ENCODE measurements at regions of chr19 and their contacts with region 1.

Region 1: GRCh38 chr19:43463381-43464136 is 1.8 kb downstream of the LYPD3 start:
- DNase-seq: peak; percentile 94 to 100 (median 99)
- ATAC-seq: peak; percentile 92
- H3K4me3 ChIP-seq: peak overlapping the region; percentile 92
- H3K4me3 Mint-ChIP-seq: peak overlapping the region; percentile 87 to 99 (median 94)
- H3K27ac ChIP-seq: peak overlapping the region; percentile 92
- H3K27ac Mint-ChIP-seq: peak overlapping the region; percentile 89 to 100 (median 99)
- H3K4me1 ChIP-seq: peaks cover 8 to 19% of the 10 kb centered on the region in 2 donors
- H3K4me1 Mint-ChIP-seq: peaks cover 24 to 67% (median 51%) of the 10 kb centered on the region in 7 donors
- H3K27me3 ChIP-seq: no peaks in the 10 kb centered on the region
- H3K27me3 Mint-ChIP-seq: peaks cover 0 to 2% (median 0%) of the 10 kb centered on the region in 5 donors

Region 2: GRCh38 chr19:43433358-43433673 is 30.2 kb before region 1 on chr19:
- CTCF ChIA-PET with region 1: interaction called, 10 read pairs
- POLR2A ChIA-PET with region 1: interaction called, 29 read pairs
- intact Hi-C with region 1: loop called in 1 of 2 experiments (anchors 1 kb)
- DNase-seq: no peak
- ATAC-seq: no peak
- H3K4me3 ChIP-seq: no peak overlapping the region
- H3K4me3 Mint-ChIP-seq: peak overlapping the region in 1 of 10 donors; percentile 29
- H3K27ac ChIP-seq: no peak overlapping the region
- H3K27ac Mint-ChIP-seq: peak overlapping the region in 8 of 9 donors; percentile 10 to 89 (median 70)
- H3K4me1 ChIP-seq: peaks cover 14 to 27% of the 10 kb centered on the region in 2 donors
- H3K4me1 Mint-ChIP-seq: peaks cover 23 to 59% (median 46%) of the 10 kb centered on the region in 7 donors
- H3K27me3 ChIP-seq: no peaks in the 10 kb centered on the region
- H3K27me3 Mint-ChIP-seq: peaks cover 0 to 2% (median 0%) of the 10 kb centered on the region in 5 donors

Region 3: DNA sequence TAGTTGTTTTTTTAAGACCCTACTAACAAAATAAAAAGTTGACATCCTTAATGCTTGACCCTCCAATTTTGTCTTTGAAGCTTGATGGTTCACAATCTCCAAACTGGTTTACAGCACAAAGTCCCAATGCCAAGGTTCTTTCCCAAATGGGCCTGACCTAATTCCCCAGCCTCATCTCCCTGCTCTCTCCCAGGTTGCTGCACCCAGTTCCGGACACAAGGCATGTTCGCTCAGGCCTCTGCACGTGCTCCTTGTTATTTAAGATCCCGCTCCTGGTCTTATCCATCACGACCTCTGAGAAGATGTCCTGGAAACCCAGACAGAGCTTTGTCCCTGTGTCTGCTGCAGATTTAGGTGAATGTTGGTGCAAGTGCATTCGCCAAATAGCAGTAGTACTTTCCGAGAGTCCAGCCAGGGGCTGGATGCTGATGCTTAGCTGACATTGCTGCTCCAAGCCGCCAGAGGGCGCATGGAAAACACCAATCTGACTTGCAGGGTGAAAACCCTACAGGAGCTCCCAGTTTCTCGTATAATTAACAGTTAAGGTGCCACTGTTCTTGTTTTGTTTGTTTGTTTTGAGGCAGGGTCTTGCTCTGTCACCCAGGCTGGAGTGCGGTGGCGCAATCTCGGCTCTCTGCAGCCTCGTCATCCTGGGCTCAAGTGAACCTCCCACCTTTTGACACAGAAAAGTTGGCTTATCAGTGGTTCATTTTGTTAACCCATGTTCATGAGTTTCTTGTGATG is 16.6 kb before region 1 on chr19:
- CTCF ChIA-PET with region 1: interaction called, 31 read pairs
- POLR2A ChIA-PET with region 1: interaction called, 17 read pairs
- intact Hi-C with region 1: loop called (anchors 1 to 2 kb)
- DNase-seq: peak; percentile 70 to 84 (median 78)
- ATAC-seq: peak; percentile 90
- H3K4me3 ChIP-seq: no peak overlapping the region
- H3K4me3 Mint-ChIP-seq: peak overlapping the region in 1 of 10 donors; percentile 13
- H3K27ac ChIP-seq: no peak overlapping the region
- H3K27ac Mint-ChIP-seq: peak overlapping the region in 8 of 9 donors; percentile 7 to 96 (median 86)
- H3K4me1 ChIP-seq: peaks cover 3 to 4% of the 10 kb centered on the region in 2 donors
- H3K4me1 Mint-ChIP-seq: peaks cover 23 to 46% (median 32%) of the 10 kb centered on the region in 7 donors
- H3K27me3 ChIP-seq: no peaks in the 10 kb centered on the region
- H3K27me3 Mint-ChIP-seq: peaks cover 0 to 2% (median 0%) of the 10 kb centered on the region in 5 donors

Region 4: DNA sequence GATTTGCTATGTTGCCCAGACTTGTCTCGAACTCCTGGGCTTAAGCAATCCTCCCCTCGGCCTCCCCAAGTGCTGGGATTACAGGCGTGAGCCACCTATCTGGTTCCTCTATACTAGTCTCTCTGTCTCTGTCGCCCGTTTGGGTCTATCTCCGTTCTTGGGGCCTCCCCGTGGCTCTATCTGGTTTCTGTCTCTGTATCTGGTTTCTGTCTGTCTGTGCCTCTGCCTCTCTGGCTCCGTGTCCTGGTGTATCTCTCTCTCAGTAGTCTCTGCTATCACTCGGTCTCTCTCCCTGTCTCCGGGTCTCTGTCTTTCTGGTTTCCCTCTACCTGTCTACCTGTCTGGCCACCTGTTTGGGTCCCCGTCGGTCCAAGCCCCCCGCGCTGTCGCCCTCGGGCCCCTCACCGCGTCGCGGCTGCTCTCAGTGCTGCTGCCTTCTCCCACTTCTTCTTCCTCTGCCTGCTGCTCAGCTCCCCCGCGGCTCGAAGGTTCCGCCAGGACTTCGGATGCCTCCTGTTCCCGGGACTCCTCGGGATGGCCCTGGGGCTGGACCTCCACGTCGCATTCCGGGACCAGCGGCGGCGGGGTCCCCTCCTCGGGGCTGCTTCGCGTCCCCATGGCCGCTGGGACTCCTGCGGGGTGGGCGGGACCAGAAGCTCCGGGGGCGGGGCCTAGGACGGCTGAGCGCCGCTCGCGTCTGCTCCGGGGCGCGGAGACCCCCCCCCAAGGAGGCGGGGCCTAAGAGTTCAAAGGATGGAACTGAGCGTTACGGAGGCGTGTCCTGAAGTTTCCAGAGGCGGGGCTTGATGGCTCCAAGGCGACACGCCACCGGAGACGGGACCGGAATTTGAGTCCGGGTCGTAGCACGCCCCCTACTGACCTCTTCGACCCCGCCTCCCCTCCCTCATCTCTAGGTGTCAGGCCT is 40.2 kb after region 1 on chr19:
- CTCF ChIA-PET with region 1: interaction called, 3 read pairs
- POLR2A ChIA-PET with region 1: interaction called, 58 read pairs
- intact Hi-C with region 1: loop called (anchors 1 kb)
- DNase-seq: peak; percentile 93 to 99 (median 98)
- ATAC-seq: peak; percentile 99
- H3K4me3 ChIP-seq: peak overlapping the region; percentile 98
- H3K4me3 Mint-ChIP-seq: peak overlapping the region; percentile 90 to 98 (median 92)
- H3K27ac ChIP-seq: peak overlapping the region; percentile 96
- H3K27ac Mint-ChIP-seq: peak overlapping the region; percentile 90 to 100 (median 96)
- H3K4me1 ChIP-seq: peaks cover 5 to 18% of the 10 kb centered on the region in 2 donors
- H3K4me1 Mint-ChIP-seq: peaks cover 25 to 59% (median 39%) of the 10 kb centered on the region in 7 donors
- H3K27me3 ChIP-seq: no peaks in the 10 kb centered on the region
- H3K27me3 Mint-ChIP-seq: no peaks in the 10 kb centered on the region

Region 5: GRCh38 chr19:43526884-43527859 is 63.6 kb after region 1 on chr19 and contains the start of gene ETHE1:
- CTCF ChIA-PET with region 1: interaction called, 3 read pairs
- POLR2A ChIA-PET with region 1: interaction called, 25 read pairs
- intact Hi-C with region 1: loop called in 1 of 2 experiments (anchors 1 kb)
- DNase-seq: peak; percentile 39 to 86 (median 50)
- ATAC-seq: peak; percentile 86
- H3K4me3 ChIP-seq: peak within 1 kb of the TSS; percentile 75
- H3K4me3 Mint-ChIP-seq: peak within 1 kb of the TSS; percentile 78 to 94 (median 84)
- H3K27ac ChIP-seq: peak within 1 kb of the TSS; percentile 81
- H3K27ac Mint-ChIP-seq: peak within 1 kb of the TSS; percentile 75 to 96 (median 86)
- H3K4me1 ChIP-seq: peaks cover 15 to 24% of the 10 kb centered on the region in 2 donors
- H3K4me1 Mint-ChIP-seq: peaks cover 18 to 38% (median 25%) of the 10 kb centered on the region in 7 donors
- H3K27me3 ChIP-seq: no peaks in the 10 kb centered on the region
- H3K27me3 Mint-ChIP-seq: no peaks in the 10 kb centered on the region
- total RNA-seq, gene ETHE1: 20.3 to 58.6 (median 23.9) TPM

Region 6: GRCh38 chr19:43575156-43575950 is 111.8 kb after region 1 on chr19 and contains the starts of genes PINLYP and XRCC1:
- CTCF ChIA-PET with region 1: no interaction called
- POLR2A ChIA-PET with region 1: interaction called, 3 read pairs
- intact Hi-C with region 1: loop called (anchors 1 to 5 kb)
- DNase-seq: peak; percentile 85 to 99 (median 95)
- ATAC-seq: peak; percentile 99
- H3K4me3 ChIP-seq: peak within 1 kb of the TSS; percentile 77
- H3K4me3 Mint-ChIP-seq: peak within 1 kb of the TSS; percentile 92 to 98 (median 96)
- H3K27ac ChIP-seq: peak within 1 kb of the TSS; percentile 98
- H3K27ac Mint-ChIP-seq: peak within 1 kb of the TSS; percentile 93 to 99 (median 96)
- H3K4me1 ChIP-seq: peaks cover 12 to 14% of the 10 kb centered on the region in 2 donors
- H3K4me1 Mint-ChIP-seq: peaks cover 26 to 63% (median 51%) of the 10 kb centered on the region in 7 donors
- H3K27me3 ChIP-seq: no peaks in the 10 kb centered on the region
- H3K27me3 Mint-ChIP-seq: peaks cover 0 to 5% (median 0%) of the 10 kb centered on the region in 5 donors
- total RNA-seq, gene PINLYP: 0.27 to 5.8 (median 0.59) TPM
- total RNA-seq, gene XRCC1: 32.0 to 36.1 (median 35.4) TPM

Region 7: GRCh38 chr19:43754503-43755255 is 291.1 kb after region 1 on chr19 and contains the start of gene SMG9:
- CTCF ChIA-PET with region 1: no interaction called
- POLR2A ChIA-PET with region 1: no interaction called
- intact Hi-C with region 1: loop called (anchors 1 to 10 kb)
- DNase-seq: peak; percentile 98 to 100 (median 99)
- ATAC-seq: peak; percentile 92
- H3K4me3 ChIP-seq: peak within 1 kb of the TSS; percentile 95
- H3K4me3 Mint-ChIP-seq: peak within 1 kb of the TSS; percentile 94 to 99 (median 97)
- H3K27ac ChIP-seq: peak within 1 kb of the TSS; percentile 85
- H3K27ac Mint-ChIP-seq: peak within 1 kb of the TSS; percentile 96 to 100 (median 98)
- H3K4me1 ChIP-seq: peaks cover 20 to 27% of the 10 kb centered on the region in 2 donors
- H3K4me1 Mint-ChIP-seq: peaks cover 5 to 62% (median 45%) of the 10 kb centered on the region in 7 donors
- H3K27me3 ChIP-seq: no peaks in the 10 kb centered on the region
- H3K27me3 Mint-ChIP-seq: peaks cover 0 to 6% (median 0%) of the 10 kb centered on the region in 5 donors
- total RNA-seq, gene SMG9: 48.5 to 75.9 (median 53.9) TPM

Measured in naive thymus-derived CD4-positive, alpha-beta T cell (primary cell).